HepG2 (cell line): ENCODE measurements at regions of chr12 and their contacts with region 1.

Region 1: GRCh38 chr12:63802012-63802608 is 22.4 kb downstream of the RXYLT1 start:
- DNase-seq: no peak
- ATAC-seq: no peak
- H3K4me3 ChIP-seq: no peak overlapping the region
- H3K27ac ChIP-seq: no peak overlapping the region
- H3K4me1 ChIP-seq: peaks cover 37% of the 10 kb centered on the region
- H3K27me3 ChIP-seq: no peaks in the 10 kb centered on the region
- CTCF ChIP-seq: peak; percentile 59
- EP300 ChIP-seq: no peak
- POLR2A ChIP-seq: no peak
- RAD21 ChIP-seq: 0 out of 2 replicates have a peak, but pooled peaks have one; percentile 16

Region 2: DNA sequence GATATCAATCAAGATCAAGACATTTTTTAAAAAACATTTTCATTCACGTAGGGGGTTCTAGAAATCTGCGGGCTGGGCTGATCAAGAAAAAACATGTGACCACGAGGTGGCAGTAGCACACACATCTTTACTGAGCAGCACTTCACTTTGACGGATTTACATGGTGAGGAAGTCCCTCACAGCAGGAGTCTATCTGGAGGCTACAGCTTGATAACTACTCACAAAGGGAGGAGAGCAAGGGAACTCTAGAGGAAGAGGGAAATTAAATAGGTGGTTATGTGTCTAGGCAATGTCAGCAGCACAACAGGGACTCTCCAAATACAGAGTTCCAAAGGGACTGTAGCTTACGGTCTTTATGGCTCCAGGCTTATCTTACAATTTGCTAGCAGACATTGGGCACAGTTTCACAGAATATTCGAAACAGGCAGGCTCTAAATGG is 381.9 kb before region 1 on chr12:
- CTCF ChIA-PET with region 1: interaction called, 4 read pairs
- POLR2A ChIA-PET with region 1: no interaction called
- in situ Hi-C with region 1: loop called (anchors 10 kb)
- intact Hi-C with region 1: no loop called
- DNase-seq: peak; percentile 36
- ATAC-seq: peak; percentile 91
- H3K4me3 ChIP-seq: no peak overlapping the region
- H3K27ac ChIP-seq: no peak overlapping the region
- H3K4me1 ChIP-seq: no peaks in the 10 kb centered on the region
- H3K27me3 ChIP-seq: no peaks in the 10 kb centered on the region
- CTCF ChIP-seq: peak; percentile 71
- EP300 ChIP-seq: no peak
- POLR2A ChIP-seq: no peak
- RAD21 ChIP-seq: 0 out of 2 replicates have a peak, but pooled peaks have one; percentile 26

Region 3: DNA sequence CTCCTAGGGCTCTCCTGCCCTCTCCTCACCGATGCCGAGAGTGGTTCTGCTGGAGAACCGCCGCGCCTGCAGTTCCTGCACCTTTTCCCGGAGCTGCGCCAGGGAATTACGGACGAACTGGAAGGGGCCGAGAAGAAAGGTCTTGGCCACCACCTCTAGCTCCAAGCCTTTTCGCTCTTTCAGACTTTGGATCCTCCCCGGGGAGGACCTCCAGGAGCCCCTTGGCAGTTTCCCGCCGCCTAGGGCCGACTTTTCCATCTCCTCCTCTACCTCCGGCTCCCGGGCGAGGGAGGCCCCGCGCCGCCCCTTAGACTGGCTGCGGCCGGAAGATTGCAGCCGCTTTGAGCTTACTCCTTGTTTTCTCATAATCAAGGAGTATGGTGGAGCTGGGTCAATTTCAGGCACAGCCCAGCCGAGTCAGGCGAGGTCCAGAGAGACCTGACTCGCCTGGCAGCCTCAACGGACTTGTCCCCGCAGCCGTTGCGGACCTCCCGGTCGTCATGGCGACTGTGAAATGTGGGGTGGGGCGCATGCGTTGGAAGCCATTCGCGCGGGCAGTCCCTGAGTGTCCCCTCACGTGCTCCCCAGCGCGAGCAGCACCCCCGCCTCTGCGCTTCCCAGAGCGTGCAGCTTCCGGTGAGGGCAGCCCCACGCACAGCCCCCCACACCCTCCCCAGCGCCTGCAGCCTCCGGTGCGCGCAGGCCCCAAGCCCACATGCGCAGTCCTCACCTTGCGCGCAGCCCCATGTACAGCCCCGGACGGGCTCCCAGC is 133.9 kb before region 1 on chr12 and contains the start of gene DPY19L2:
- CTCF ChIA-PET with region 1: interaction called, 3 read pairs
- POLR2A ChIA-PET with region 1: no interaction called
- in situ Hi-C with region 1: loop called (anchors 25 kb)
- intact Hi-C with region 1: loop called (anchors 2 kb)
- DNase-seq: peak; percentile 1
- ATAC-seq: peak; percentile 76
- H3K4me3 ChIP-seq: peak within 1 kb of the TSS in 2 of 3 experiments; percentile 39 to 50; a peak in 3 of 6 replicates
- H3K27ac ChIP-seq: no peak within 1 kb of the TSS
- H3K4me1 ChIP-seq: no peaks in the 10 kb centered on the region
- H3K27me3 ChIP-seq: 0 out of 5 replicates have a peak, but pooled peaks cover 0 to 6% of the 10 kb centered on the region in 2 experiments
- CTCF ChIP-seq: no peak
- EP300 ChIP-seq: no peak
- POLR2A ChIP-seq: no peak
- RAD21 ChIP-seq: no peak
- total RNA-seq, gene DPY19L2: not detected in 2 replicates

Region 4: GRCh38 chr12:63766498-63766897 is 35.6 kb before region 1 on chr12:
- CTCF ChIA-PET with region 1: no interaction called
- POLR2A ChIA-PET with region 1: no interaction called
- in situ Hi-C with region 1: no loop called
- intact Hi-C with region 1: no loop called
- DNase-seq: no peak
- ATAC-seq: no peak
- H3K4me3 ChIP-seq: no peak overlapping the region
- H3K27ac ChIP-seq: no peak overlapping the region
- H3K4me1 ChIP-seq: no peaks in the 10 kb centered on the region
- H3K27me3 ChIP-seq: no peaks in the 10 kb centered on the region
- CTCF ChIP-seq: no peak
- EP300 ChIP-seq: no peak
- POLR2A ChIP-seq: no peak
- RAD21 ChIP-seq: no peak

Region 5: DNA sequence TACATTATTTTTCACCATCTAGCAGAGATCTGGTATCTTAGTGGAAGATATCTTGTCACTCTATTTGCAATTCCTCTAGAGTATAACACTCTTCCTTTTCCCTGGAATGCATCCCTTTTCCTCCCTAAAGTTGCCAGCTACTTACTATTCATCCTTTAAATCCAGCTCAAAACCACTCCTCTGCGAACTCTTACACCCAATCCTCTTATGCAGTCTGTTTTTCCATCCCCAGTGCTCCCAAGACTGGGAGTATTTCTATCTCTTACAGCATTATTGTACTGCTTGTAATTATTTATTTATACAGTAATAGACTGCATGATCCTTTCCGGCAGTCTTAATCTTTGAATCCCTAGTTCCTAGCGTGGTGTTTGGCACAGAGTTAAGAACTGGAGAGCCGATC is 39.5 kb after region 1 on chr12:
- CTCF ChIA-PET with region 1: no interaction called
- POLR2A ChIA-PET with region 1: no interaction called
- in situ Hi-C with region 1: no loop called
- intact Hi-C with region 1: no loop called
- DNase-seq: no peak
- ATAC-seq: no peak
- H3K4me3 ChIP-seq: no peak overlapping the region
- H3K27ac ChIP-seq: no peak overlapping the region
- H3K4me1 ChIP-seq: peaks cover 28% of the 10 kb centered on the region
- H3K27me3 ChIP-seq: no peaks in the 10 kb centered on the region; a peak in 1 of 5 replicates
- CTCF ChIP-seq: no peak
- EP300 ChIP-seq: no peak
- POLR2A ChIP-seq: no peak
- RAD21 ChIP-seq: no peak